ENCODE measurements at regions of chr4 and their contacts with region 1.

Region 1: DNA sequence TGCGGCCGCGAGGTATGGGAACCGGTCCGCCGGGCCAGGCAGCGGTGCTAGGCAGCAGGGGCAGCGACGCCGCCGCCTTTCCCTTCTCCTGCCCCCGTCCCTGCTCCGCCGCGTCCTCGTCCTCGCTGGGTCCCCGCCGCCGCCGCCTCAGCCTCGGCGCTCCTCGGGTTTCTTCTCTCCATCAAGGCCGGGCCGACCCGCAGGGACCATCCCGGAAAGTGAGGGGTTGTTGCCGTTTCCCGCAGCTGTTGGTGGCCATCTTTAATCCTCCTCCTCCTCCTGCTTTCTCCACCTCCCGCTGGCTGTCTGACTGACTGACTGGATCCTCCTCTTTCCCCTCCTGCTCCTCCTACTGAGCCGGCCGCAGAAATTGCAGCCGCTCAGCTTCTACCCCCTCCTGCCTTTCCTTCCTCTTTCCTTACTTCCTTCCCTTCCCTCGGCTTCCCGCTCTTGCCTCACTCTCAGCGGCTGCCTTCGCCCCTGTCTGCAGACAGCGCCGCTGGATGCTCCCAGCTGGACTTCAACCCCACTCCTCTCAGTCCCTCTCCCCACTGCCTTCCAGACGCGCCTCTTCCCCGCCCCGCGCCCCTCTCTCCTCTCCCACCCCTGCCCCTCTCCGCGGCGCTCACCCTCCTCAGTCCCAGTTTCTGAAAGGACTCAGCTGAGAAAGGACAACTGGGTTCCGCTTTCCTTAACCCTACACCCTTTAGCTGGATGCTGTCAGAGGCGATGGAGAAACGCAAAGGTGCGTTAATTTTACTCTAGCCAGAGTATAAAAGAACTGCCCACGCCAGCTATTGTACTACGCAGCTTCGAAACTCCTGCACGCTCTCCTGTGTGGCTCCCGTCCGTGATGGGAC is at the start of gene WDFY3:
- H3K4me3 Mint-ChIP-seq: peak within 1 kb of the TSS; percentile 98
- H3K27ac Mint-ChIP-seq: peak within 1 kb of the TSS; percentile 99
- H3K4me1 Mint-ChIP-seq: peaks cover 19% of the 10 kb centered on the region
- H3K27me3 Mint-ChIP-seq: peaks cover 3% of the 10 kb centered on the region

Region 2: DNA sequence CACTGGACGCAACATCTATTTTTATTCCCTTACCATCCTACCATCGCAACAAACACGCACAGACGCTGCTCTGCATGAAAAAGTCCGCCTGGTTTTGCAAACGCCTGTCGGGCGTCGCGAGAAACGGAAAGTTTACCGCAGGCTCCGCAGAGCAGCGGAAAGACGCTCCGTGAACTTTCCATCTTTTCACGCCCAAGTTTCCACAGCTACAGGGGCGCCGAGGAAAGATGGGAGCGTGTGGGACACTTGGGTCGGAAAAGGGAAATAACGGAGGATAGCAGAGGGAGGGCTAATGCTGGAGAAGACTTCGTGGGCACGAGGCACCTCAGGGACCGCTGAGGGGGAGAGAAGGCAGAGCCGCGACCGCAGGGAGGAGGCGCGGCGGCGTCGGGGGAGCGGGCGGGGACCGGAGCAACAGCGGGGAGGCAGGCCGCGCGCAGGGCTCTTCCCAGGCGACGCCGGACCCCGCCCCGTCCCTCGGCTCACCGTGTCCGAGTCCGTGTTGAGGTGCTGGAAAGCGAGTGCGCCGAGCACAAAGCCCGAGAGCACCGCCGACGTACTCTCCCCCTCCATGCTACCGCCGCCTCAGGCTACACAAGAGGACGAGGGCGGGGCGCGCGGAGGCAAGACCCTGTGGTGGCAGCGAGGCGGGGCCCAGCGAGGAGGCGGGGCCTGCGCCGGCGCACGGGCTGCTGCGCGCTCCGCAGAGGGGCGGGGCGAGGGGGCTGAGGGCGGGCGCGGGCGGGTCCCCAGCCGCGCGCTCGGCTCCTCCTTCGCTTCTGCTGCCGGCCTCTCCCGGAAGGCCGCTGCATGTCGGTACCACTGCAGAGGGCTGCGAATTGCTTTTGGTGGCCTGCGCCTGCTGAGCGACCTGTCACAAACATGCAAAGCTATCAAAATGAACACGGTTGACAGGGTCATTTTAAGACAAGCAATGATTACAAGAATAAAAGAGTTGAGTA is 1481.8 kb before region 1 on chr4 and contains the start of gene ABRAXAS1:
- intact Hi-C with region 1: loop called (anchors 10 kb)
- H3K4me3 Mint-ChIP-seq: peak within 1 kb of the TSS; percentile 88
- H3K27ac Mint-ChIP-seq: peak within 1 kb of the TSS; percentile 85
- H3K4me1 Mint-ChIP-seq: peaks cover 10% of the 10 kb centered on the region
- H3K27me3 Mint-ChIP-seq: no peaks in the 10 kb centered on the region

Region 3: DNA sequence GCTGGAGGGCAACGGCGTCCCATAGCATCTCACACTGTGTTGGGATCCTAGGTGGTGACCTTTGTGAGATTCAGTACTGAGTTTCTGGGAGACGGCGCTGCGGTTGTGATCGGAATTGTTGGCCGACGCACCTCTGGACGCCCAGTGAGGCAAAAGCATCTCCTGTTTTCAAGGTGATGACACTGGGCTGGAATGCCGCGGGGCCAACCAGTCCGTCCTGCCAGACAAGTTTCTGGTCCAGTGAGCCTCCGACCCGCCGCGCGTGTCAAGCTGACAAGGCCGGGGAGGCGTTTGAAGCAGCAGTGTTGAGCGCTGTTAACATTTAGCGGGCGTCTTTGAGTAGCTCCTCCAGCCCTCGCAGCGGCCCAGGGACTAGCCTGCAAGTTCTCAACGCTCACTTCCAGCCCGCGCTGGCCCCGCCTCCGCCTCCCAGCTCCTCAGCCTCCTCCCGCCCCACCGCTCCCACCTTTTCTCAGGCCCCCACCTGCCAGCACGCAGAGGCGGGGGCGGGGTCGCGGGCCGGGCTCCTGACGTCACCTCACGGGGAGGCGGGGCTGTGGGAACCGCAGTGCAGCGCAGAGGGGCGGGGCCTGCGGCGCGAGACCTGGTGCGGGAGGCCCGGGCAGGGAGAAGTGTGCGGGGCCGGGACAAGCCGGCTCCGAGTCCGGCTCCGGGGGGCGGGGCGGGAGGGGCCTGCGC is 384.2 kb before region 1 on chr4:
- intact Hi-C with region 1: loop called (anchors 5 kb)
- H3K4me3 Mint-ChIP-seq: peak overlapping the region; percentile 76
- H3K27ac Mint-ChIP-seq: peak overlapping the region; percentile 70
- H3K4me1 Mint-ChIP-seq: peaks cover 31% of the 10 kb centered on the region
- H3K27me3 Mint-ChIP-seq: peaks cover 50% of the 10 kb centered on the region

Region 4: DNA sequence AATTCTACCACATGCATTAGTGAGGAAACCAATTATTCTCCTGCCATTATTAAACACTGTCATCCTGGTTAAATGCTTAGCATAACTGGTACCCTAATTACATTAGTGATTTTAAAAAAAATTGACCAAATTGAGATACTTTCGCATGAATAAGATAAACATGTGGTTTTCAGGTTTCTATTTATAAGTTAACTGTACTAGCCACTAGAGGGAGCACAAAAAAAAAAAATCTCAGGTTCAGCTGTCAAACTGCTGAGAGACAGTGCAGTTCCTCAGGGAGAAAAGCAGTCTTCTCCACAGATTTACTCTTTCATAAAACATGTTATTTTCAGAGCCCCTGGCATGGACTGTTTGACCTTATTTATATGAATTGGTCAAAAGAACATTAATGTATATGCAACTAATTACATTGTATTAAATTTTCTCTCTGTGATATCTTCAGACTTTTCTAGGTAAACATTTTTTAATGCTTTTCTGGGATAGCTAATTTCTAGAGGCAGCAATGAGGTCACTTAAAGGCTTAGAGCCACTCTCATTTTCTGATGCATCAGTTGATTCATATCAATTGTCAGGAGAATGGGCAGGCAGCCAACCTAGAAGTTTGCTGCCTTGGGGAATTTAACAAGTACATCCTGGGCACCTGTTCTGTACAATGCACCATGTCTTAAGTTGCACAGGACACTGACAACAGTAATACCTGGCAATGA is 216.2 kb before region 1 on chr4:
- intact Hi-C with region 1: loop called (anchors 1 kb)
- H3K4me3 Mint-ChIP-seq: no peak overlapping the region
- H3K27ac Mint-ChIP-seq: no peak overlapping the region
- H3K4me1 Mint-ChIP-seq: peaks cover 9% of the 10 kb centered on the region
- H3K27me3 Mint-ChIP-seq: no peaks in the 10 kb centered on the region

Region 5: DNA sequence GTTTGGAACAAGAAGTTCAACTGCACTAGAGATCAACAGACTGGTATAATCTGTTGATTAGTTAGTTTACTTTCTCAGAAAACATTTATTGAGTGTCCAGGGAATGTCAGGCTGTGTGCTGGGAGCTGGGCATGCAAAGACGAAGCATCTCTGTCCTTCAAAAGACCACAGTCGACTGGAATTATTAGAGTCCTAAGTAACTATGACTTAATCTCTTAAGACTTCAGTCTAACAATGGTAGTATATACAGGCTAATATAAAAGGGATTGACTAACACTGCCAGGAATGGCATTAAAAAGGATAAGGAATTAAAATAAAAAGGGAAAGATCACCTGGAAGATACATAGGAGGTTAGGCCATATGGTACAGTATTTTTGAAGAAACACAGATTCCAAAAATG is 128.9 kb before region 1 on chr4:
- intact Hi-C with region 1: loop called (anchors 10 kb)
- H3K4me3 Mint-ChIP-seq: no peak overlapping the region
- H3K27ac Mint-ChIP-seq: no peak overlapping the region
- H3K4me1 Mint-ChIP-seq: peaks cover 5% of the 10 kb centered on the region
- H3K27me3 Mint-ChIP-seq: no peaks in the 10 kb centered on the region